Mammary epithelial cell (primary cell): ENCODE measurements at regions of chr19 and their contacts with region 1.

Region 1: GRCh38 chr19:23867895-23868294 is 46.8 kb upstream of the ZNF726 start:
- DNase-seq: no peak
- H3K4me3 ChIP-seq: no peak overlapping the region
- H3K27ac ChIP-seq: no peak overlapping the region
- H3K4me1 ChIP-seq: no peaks in the 10 kb centered on the region
- H3K27me3 ChIP-seq: no peaks in the 10 kb centered on the region
- CTCF ChIP-seq: no peak

Region 2: DNA sequence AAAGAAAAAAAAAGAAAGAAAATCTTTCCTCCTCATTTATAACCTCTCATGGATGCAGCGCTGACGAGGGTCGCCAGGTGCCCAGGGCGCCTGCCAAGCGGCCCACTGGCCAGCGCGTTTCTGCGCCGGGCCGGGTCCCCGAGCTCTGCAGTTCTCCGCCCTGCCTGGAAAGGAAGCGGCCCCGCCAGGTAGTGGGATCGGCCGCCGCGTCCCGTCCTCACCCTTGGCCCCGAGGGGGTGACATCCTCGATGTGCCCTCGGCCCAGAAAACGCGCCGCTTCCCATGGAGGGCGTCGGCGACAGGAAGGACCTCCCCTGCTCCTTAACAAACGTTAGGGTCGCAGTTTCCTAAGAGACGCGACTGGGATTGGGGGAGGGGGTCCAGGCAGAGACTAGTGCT is 103.7 kb after region 1 on chr19:
- CTCF ChIA-PET with region 1: no interaction called
- dilution Hi-C with region 1: loop called (anchors 5 kb)
- in situ Hi-C with region 1: no loop called
- intact Hi-C with region 1: no loop called
- DNase-seq: no peak
- H3K4me3 ChIP-seq: no peak overlapping the region
- H3K27ac ChIP-seq: no peak overlapping the region
- H3K4me1 ChIP-seq: no peaks in the 10 kb centered on the region
- H3K27me3 ChIP-seq: peaks cover 4% of the 10 kb centered on the region
- CTCF ChIP-seq: no peak

Region 3: GRCh38 chr19:24159707-24160106 is 291.8 kb after region 1 on chr19:
- CTCF ChIA-PET with region 1: no interaction called
- dilution Hi-C with region 1: no loop called
- in situ Hi-C with region 1: no loop called
- intact Hi-C with region 1: loop called (anchors 5 kb)
- DNase-seq: peak; percentile 29
- H3K4me3 ChIP-seq: no peak overlapping the region
- H3K27ac ChIP-seq: no peak overlapping the region
- H3K4me1 ChIP-seq: no peaks in the 10 kb centered on the region
- H3K27me3 ChIP-seq: no peaks in the 10 kb centered on the region
- CTCF ChIP-seq: peak; percentile 37 to 76